Dorsolateral prefrontal cortex (tissue), 120 donors: ENCODE measurements at regions of chr7 and their contacts with region 1.

Region 1: GRCh38 chr7:6160191-6160623 is 112.2 kb downstream of the CYTH3 start:
- DNase-seq: peak in 7 of 10 donors; percentile 51 to 80 (median 62)
- H3K4me3 ChIP-seq: peak overlapping the region in 7 of 59 donors; percentile 3 to 23 (median 9)
- H3K27ac ChIP-seq: peak overlapping the region in 49 of 59 donors; percentile 16 to 90 (median 79)
- H3K27me3 ChIP-seq: no peaks in the 10 kb centered on the region
- CTCF ChIP-seq: peak; percentile 36 to 92 (median 74)

Region 2: DNA sequence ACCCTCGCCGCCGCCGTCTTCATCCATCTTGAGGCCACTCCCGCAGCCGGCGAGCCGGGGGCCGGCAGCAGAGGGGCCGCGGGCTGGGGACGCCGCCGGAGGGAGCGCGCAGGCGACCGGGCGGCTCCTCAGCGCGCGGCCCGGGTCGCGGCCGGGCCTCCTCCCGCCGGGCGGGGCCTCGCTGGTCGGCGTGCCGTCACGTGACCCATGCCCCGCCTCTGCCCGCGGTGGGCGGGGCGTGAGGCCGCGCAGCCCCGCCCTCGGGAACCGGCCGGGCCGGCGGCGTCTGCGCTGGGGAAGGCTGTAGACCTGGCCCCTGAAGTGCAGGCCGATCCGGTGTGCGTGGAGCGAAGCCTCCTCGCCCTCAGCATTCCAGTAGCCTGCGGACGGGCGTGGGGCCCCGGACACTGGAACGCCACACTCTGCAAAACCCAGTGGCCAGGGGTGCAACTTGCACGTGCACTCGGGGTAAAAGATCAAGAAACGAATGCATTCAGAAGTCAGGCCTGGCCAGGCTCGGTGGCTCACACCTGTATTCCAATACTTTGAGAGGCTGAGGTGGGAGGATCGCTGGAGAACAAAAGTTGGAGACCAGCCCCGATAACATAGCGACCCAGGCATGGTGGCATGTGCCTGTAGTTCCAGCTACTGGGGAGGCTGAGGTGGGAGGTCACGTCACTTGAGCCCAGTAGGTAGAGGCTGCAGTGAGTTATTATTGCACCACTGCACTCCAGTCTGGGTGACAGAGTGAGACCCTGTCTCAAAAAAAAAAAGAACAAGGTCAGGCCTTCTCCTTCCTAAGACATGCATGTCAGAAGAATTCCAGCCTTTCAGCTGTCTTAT is 112.5 kb after region 1 on chr7 and contains the start of gene CYTH3:
- intact Hi-C with region 1: loop called in 1 of 2 experiments (anchors 5 kb)
- DNase-seq: peak; percentile 65 to 93 (median 78)
- H3K4me3 ChIP-seq: peak within 1 kb of the TSS; percentile 63 to 98 (median 88)
- H3K27ac ChIP-seq: peak within 1 kb of the TSS in 47 of 59 donors; percentile 19 to 87 (median 63)
- H3K27me3 ChIP-seq: no peaks in the 10 kb centered on the region
- CTCF ChIP-seq: peak in 6 of 56 donors; percentile 10 to 19 (median 14)
- total RNA-seq, gene CYTH3: 18.6 to 63.4 (median 41.6) TPM

Region 3: GRCh38 chr7:6323967-6324701 is 163.9 kb after region 1 on chr7:
- intact Hi-C with region 1: loop called (anchors 2 kb)
- DNase-seq: no peak
- H3K4me3 ChIP-seq: no peak overlapping the region
- H3K27ac ChIP-seq: no peak overlapping the region
- H3K27me3 ChIP-seq: no peaks in the 10 kb centered on the region
- CTCF ChIP-seq: no peak

Region 4: GRCh38 chr7:6430271-6430940 is 270.2 kb after region 1 on chr7:
- intact Hi-C with region 1: loop called in 1 of 2 experiments (anchors 5 kb)
- DNase-seq: peak in 3 of 10 donors; percentile 39 to 65 (median 55)
- H3K4me3 ChIP-seq: no peak overlapping the region
- H3K27ac ChIP-seq: peak overlapping the region in 53 of 59 donors; percentile 25 to 88 (median 75)
- H3K27me3 ChIP-seq: no peaks in the 10 kb centered on the region
- CTCF ChIP-seq: peak in 7 of 56 donors; percentile 9 to 30 (median 17)

Region 5: GRCh38 chr7:6443351-6443941 is 283.2 kb after region 1 on chr7:
- intact Hi-C with region 1: no loop called
- DNase-seq: no peak
- H3K4me3 ChIP-seq: peak overlapping the region in 1 of 59 donors; percentile 16
- H3K27ac ChIP-seq: peak overlapping the region in 4 of 59 donors; percentile 21 to 69 (median 44)
- H3K27me3 ChIP-seq: no peaks in the 10 kb centered on the region
- CTCF ChIP-seq: no peak